ENCODE measurements at regions of chr14 and their contacts with region 1.

Region 1: GRCh38 chr14:30855345-30856037 is 18.9 kb upstream of the COCH start:
- DNase-seq: peak; percentile 61
- H3K4me3 Mint-ChIP-seq: no peak overlapping the region
- H3K27ac Mint-ChIP-seq: peak overlapping the region; percentile 12
- H3K4me1 Mint-ChIP-seq: peaks cover 17% of the 10 kb centered on the region
- H3K27me3 Mint-ChIP-seq: peaks cover 17% of the 10 kb centered on the region

Region 2: GRCh38 chr14:30085943-30086342 is 769.5 kb before region 1 on chr14:
- CTCF ChIA-PET with region 1: no interaction called
- intact Hi-C with region 1: no loop called
- DNase-seq: no peak
- H3K4me3 Mint-ChIP-seq: no peak overlapping the region
- H3K27ac Mint-ChIP-seq: no peak overlapping the region
- H3K4me1 Mint-ChIP-seq: no peaks in the 10 kb centered on the region
- H3K27me3 Mint-ChIP-seq: peaks cover 4% of the 10 kb centered on the region

Region 3: GRCh38 chr14:30874120-30874998 is 18.9 kb after region 1 on chr14 and contains the start of gene COCH:
- CTCF ChIA-PET with region 1: no interaction called
- intact Hi-C with region 1: loop called (anchors 2 kb)
- DNase-seq: peak; percentile 34
- H3K4me3 Mint-ChIP-seq: peak within 1 kb of the TSS; percentile 78
- H3K27ac Mint-ChIP-seq: no peak within 1 kb of the TSS
- H3K4me1 Mint-ChIP-seq: peaks cover 9% of the 10 kb centered on the region
- H3K27me3 Mint-ChIP-seq: peaks cover 45% of the 10 kb centered on the region
- total RNA-seq, gene COCH: 1.3 TPM

Measured in activated naive CD4-positive, alpha-beta T cell treated with anti-CD3 and anti-CD28 coated beads for 36 hours (primary cell).